Pancreas (tissue), 10 donors: ENCODE measurements at regions of chr4 and their contacts with region 1.

Region 1: GRCh38 chr4:20422398-20422797 is 170.7 kb downstream of the SLIT2 start:
- DNase-seq: peak in 4 of 6 donors; percentile 9 to 59 (median 22)
- ATAC-seq: peak; percentile 62 to 87 (median 84)
- H3K4me3 ChIP-seq: no peak overlapping the region
- H3K27ac ChIP-seq: no peak overlapping the region
- H3K4me1 ChIP-seq: no peaks in the 10 kb centered on the region
- H3K27me3 ChIP-seq: no peaks in the 10 kb centered on the region
- CTCF ChIP-seq: peak in 3 of 4 donors; percentile 23 to 43 (median 30)

Region 2: GRCh38 chr4:20532871-20533870 is 110.8 kb after region 1 on chr4:
- intact Hi-C with region 1: loop called in 1 of 3 experiments (anchors 10 kb)
- DNase-seq: no peak
- ATAC-seq: no peak
- H3K4me3 ChIP-seq: no peak overlapping the region
- H3K27ac ChIP-seq: no peak overlapping the region
- H3K4me1 ChIP-seq: no peaks in the 10 kb centered on the region
- H3K27me3 ChIP-seq: no peaks in the 10 kb centered on the region
- CTCF ChIP-seq: no peak

Region 3: DNA sequence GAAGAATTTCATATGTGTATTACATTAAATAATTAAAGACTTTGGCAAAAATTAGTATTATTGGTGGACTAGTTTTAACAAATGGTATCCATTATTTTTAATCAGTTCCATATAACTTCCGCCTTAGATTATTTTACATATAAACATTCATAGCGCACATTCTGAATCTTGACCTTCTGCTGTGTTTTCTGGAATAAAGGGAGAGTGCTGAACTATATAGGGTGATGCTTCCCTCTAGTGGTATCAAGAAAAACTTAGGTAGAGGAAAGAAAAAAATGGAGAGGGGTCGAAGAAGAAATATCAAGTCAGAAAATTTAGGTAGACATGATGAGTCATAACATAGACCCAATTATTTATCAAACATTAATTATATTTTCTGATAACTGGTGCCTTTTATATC is 122.2 kb after region 1 on chr4:
- intact Hi-C with region 1: loop called (anchors 10 kb)
- DNase-seq: no peak
- ATAC-seq: peak; percentile 48 to 83 (median 78)
- H3K4me3 ChIP-seq: no peak overlapping the region
- H3K27ac ChIP-seq: no peak overlapping the region
- H3K4me1 ChIP-seq: no peaks in the 10 kb centered on the region
- H3K27me3 ChIP-seq: no peaks in the 10 kb centered on the region
- CTCF ChIP-seq: peak in 3 of 4 donors; percentile 38 to 51 (median 51)

Region 4: GRCh38 chr4:20662851-20663250 is 240.5 kb after region 1 on chr4:
- intact Hi-C with region 1: no loop called
- DNase-seq: no peak
- ATAC-seq: no peak
- H3K4me3 ChIP-seq: no peak overlapping the region
- H3K27ac ChIP-seq: no peak overlapping the region
- H3K4me1 ChIP-seq: no peaks in the 10 kb centered on the region
- H3K27me3 ChIP-seq: no peaks in the 10 kb centered on the region
- CTCF ChIP-seq: no peak